ENCODE measurements at regions of chr20 and their contacts with region 1.

Region 1: GRCh38 chr20:44080646-44081267 is 106.2 kb downstream of the JPH2 start:
- DNase-seq: peak; percentile 72 to 80 (median 75)
- H3K4me3 ChIP-seq: no peak overlapping the region
- H3K4me3 Mint-ChIP-seq: no peak overlapping the region
- H3K27ac ChIP-seq: no peak overlapping the region
- H3K27ac Mint-ChIP-seq: peak overlapping the region in 5 of 7 donors; percentile 33 to 88 (median 67)
- H3K4me1 ChIP-seq: peaks cover 5% of the 10 kb centered on the region
- H3K4me1 Mint-ChIP-seq: peaks cover 5 to 11% (median 8%) of the 10 kb centered on the region in 4 donors
- H3K27me3 ChIP-seq: no peaks in the 10 kb centered on the region
- H3K27me3 Mint-ChIP-seq: peaks cover 0 to 1% of the 10 kb centered on the region in 2 donors

Region 2: DNA sequence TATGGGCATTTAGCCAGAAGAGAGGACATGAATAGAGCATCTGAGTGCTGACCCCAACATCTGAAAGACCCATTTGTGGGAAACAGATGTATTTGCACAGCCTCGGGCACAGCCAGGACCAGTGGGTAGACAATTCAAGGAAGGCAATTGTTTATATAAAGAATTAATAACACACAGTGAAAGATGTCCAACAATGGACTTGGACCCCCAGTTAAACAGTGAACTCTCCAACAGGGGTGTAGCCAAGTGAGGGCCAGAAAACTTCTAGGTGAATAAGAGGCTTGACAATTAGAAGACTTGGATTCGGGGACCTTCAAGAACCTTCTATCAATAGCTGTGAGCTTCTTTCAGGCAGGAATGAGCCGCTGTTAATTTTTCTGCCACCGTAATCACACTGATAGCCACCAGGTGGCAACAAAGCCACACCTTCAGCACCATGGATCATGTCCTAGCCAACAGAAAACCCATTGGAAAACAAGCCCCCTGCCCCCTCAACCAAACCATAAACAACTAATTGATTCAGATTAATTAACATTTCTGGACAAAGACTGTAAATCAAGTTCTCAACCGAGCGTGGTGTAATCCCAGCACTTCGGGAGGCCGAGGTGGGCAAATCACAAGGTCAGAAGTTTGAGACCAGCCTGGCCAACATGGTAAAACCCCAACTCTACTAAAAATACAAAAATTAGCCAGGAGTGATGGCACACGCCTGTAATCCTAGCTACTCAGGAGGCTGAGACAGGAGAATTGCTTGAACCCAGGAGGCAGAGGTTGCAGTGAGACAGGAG is 631.8 kb before region 1 on chr20:
- CTCF ChIA-PET with region 1: interaction called, 3 read pairs
- POLR2A ChIA-PET with region 1: no interaction called
- intact Hi-C with region 1: loop called (anchors 2 kb)
- DNase-seq: peak in 4 of 5 donors; percentile 28 to 41 (median 34)
- H3K4me3 ChIP-seq: no peak overlapping the region
- H3K4me3 Mint-ChIP-seq: no peak overlapping the region
- H3K27ac ChIP-seq: no peak overlapping the region
- H3K27ac Mint-ChIP-seq: no peak overlapping the region
- H3K4me1 ChIP-seq: no peaks in the 10 kb centered on the region
- H3K4me1 Mint-ChIP-seq: peaks cover 0 to 6% (median 5%) of the 10 kb centered on the region in 4 donors
- H3K27me3 ChIP-seq: no peaks in the 10 kb centered on the region
- H3K27me3 Mint-ChIP-seq: peaks cover 11 to 33% of the 10 kb centered on the region in 2 donors

Region 3: GRCh38 chr20:43749734-43750294 is 330.9 kb before region 1 on chr20:
- CTCF ChIA-PET with region 1: interaction called, 143 read pairs
- POLR2A ChIA-PET with region 1: no interaction called
- intact Hi-C with region 1: no loop called
- DNase-seq: peak; percentile 59 to 78 (median 62)
- H3K4me3 ChIP-seq: no peak overlapping the region
- H3K4me3 Mint-ChIP-seq: peak overlapping the region in 1 of 8 donors; percentile 37
- H3K27ac ChIP-seq: no peak overlapping the region
- H3K27ac Mint-ChIP-seq: peak overlapping the region in 2 of 7 donors; percentile 62 to 66
- H3K4me1 ChIP-seq: peaks cover 30% of the 10 kb centered on the region
- H3K4me1 Mint-ChIP-seq: peaks cover 19 to 31% (median 21%) of the 10 kb centered on the region in 4 donors
- H3K27me3 ChIP-seq: no peaks in the 10 kb centered on the region
- H3K27me3 Mint-ChIP-seq: peaks cover 3 to 22% of the 10 kb centered on the region in 2 donors

Region 4: DNA sequence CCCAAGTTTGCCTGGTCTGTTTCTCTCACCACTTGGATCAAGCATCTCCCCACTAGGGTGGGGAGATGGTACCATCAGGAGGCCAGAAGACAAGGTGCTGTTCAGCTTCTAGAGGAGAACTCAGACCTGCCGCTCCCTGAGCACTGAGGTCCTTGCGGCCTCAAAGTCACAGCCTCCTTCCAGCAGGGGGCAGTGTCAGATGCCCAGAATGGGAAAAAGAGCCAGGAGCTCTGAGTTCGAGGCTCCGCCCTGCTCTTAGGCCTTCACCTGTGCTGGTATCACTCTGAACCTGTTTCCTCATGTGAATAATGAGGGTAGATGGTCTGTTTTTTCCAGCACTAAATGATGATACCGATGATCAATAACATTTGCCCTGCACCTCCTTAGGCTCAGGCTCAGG is 97.4 kb before region 1 on chr20:
- CTCF ChIA-PET with region 1: interaction called, 4 read pairs
- POLR2A ChIA-PET with region 1: no interaction called
- intact Hi-C with region 1: loop called (anchors 1 kb)
- DNase-seq: no peak
- H3K4me3 ChIP-seq: no peak overlapping the region
- H3K4me3 Mint-ChIP-seq: no peak overlapping the region
- H3K27ac ChIP-seq: no peak overlapping the region
- H3K27ac Mint-ChIP-seq: no peak overlapping the region
- H3K4me1 ChIP-seq: peaks cover 11% of the 10 kb centered on the region
- H3K4me1 Mint-ChIP-seq: peaks cover 2 to 10% (median 8%) of the 10 kb centered on the region in 4 donors
- H3K27me3 ChIP-seq: no peaks in the 10 kb centered on the region
- H3K27me3 Mint-ChIP-seq: peaks cover 0 to 3% of the 10 kb centered on the region in 2 donors

Region 5: DNA sequence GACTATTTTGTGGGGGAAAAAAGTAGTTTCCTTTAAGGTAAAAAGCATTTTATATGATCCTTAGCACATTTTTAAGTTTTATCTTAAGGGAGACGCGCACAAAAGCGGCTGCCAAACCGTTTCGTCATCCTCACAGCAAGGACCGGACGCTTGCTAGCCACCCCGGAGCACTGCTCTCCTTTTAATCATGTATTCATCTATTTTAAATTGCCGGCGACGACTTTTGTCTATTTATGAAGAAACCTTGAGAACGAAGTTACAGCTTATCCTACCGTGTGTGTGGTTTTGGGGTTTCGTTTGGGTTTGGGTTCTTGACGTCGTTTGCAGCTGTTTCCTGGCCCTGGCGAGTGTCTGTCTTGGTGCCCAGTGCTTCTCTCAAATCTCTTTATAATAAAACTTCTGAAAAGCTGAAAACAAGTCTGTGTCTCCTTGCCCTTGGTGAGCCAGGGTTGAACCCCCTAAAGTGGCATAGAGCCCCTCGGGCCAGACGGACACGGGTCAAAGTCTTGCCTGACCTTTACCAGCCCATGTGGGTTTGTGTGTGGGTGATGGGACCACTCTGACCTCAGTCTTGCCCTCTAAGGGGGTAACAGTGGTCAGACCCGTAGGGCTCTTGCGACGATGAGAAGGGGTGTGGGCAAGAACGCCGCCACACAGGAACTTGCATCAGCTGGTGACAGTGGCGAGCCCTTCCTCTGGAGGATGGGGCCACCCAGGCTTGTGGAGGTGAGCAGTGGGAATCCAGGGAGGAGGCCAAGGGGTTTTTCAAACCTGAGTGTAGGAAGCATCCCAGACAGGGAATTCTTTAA is 11.3 kb before region 1 on chr20:
- CTCF ChIA-PET with region 1: interaction called, 10 read pairs
- POLR2A ChIA-PET with region 1: interaction called, 5 read pairs
- intact Hi-C with region 1: loop called (anchors 1 kb)
- DNase-seq: peak; percentile 77 to 89 (median 84)
- H3K4me3 ChIP-seq: peak overlapping the region; percentile 40 to 57
- H3K4me3 Mint-ChIP-seq: peak overlapping the region; percentile 83 to 92 (median 88)
- H3K27ac ChIP-seq: peak overlapping the region; percentile 55
- H3K27ac Mint-ChIP-seq: peak overlapping the region; percentile 87 to 99 (median 98)
- H3K4me1 ChIP-seq: peaks cover 57% of the 10 kb centered on the region
- H3K4me1 Mint-ChIP-seq: peaks cover 23 to 68% (median 44%) of the 10 kb centered on the region in 4 donors
- H3K27me3 ChIP-seq: no peaks in the 10 kb centered on the region
- H3K27me3 Mint-ChIP-seq: no peaks in the 10 kb centered on the region

Region 6: DNA sequence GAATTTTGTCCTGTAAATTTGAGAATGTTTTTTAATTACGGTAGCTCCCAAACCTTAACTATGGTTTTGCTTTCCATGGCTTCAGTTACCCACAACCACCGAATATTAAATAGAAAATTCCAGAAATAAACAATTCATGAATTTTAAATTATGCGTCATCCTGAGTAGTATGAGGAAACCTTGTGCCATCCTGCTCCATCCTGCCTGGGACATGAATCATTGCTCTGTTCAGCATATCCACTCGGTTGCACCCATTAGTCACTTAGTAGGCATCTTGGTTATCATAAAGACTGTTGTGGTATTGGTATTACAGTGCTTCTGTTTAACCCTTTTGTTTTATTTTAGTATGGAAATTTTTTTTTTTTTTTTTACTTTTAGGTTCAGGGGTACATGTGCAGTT is 980.5 kb after region 1 on chr20:
- CTCF ChIA-PET with region 1: no interaction called
- POLR2A ChIA-PET with region 1: no interaction called
- intact Hi-C with region 1: no loop called
- DNase-seq: no peak
- H3K4me3 ChIP-seq: no peak overlapping the region
- H3K4me3 Mint-ChIP-seq: peak overlapping the region in 1 of 8 donors; percentile 5
- H3K27ac ChIP-seq: no peak overlapping the region
- H3K27ac Mint-ChIP-seq: peak overlapping the region in 1 of 7 donors; percentile 48
- H3K4me1 ChIP-seq: peaks cover 60% of the 10 kb centered on the region
- H3K4me1 Mint-ChIP-seq: peaks cover 55 to 84% (median 70%) of the 10 kb centered on the region in 4 donors
- H3K27me3 ChIP-seq: no peaks in the 10 kb centered on the region
- H3K27me3 Mint-ChIP-seq: no peaks in the 10 kb centered on the region

Measured in CD4-positive, alpha-beta memory T cell (primary cell).